Naive thymus-derived CD8-positive, alpha-beta T cell (primary cell): ENCODE measurements at regions of chr12 and their contacts with region 1.

Region 1: GRCh38 chr12:122067966-122068365 is 10.6 kb upstream of the MLXIP start:
- DNase-seq: peak in 8 of 10 donors; percentile 24 to 72 (median 50)
- ATAC-seq: peak; percentile 80 to 82
- H3K4me3 Mint-ChIP-seq: peak overlapping the region; percentile 64 to 86 (median 81)
- H3K27ac Mint-ChIP-seq: peak overlapping the region; percentile 44 to 94 (median 81)
- H3K4me1 Mint-ChIP-seq: peaks cover 21 to 39% (median 34%) of the 10 kb centered on the region in 4 donors
- H3K27me3 Mint-ChIP-seq: no peaks in the 10 kb centered on the region

Region 2: GRCh38 chr12:122040579-122041386 is 27.2 kb before region 1 on chr12:
- POLR2A ChIA-PET with region 1: no interaction called
- DNase-seq: no peak
- ATAC-seq: no peak
- H3K4me3 Mint-ChIP-seq: no peak overlapping the region
- H3K27ac Mint-ChIP-seq: peak overlapping the region in 2 of 10 donors; percentile 19 to 50
- H3K4me1 Mint-ChIP-seq: peaks cover 0 to 1% (median 0%) of the 10 kb centered on the region in 4 donors
- H3K27me3 Mint-ChIP-seq: no peaks in the 10 kb centered on the region

Region 3: GRCh38 chr12:122097927-122098756 is 30.2 kb after region 1 on chr12:
- POLR2A ChIA-PET with region 1: interaction called, 15 read pairs
- DNase-seq: no peak
- ATAC-seq: peak; percentile 29 to 36
- H3K4me3 Mint-ChIP-seq: peak overlapping the region; percentile 60 to 90 (median 74)
- H3K27ac Mint-ChIP-seq: peak overlapping the region in 9 of 10 donors; percentile 91 to 98 (median 96)
- H3K4me1 Mint-ChIP-seq: peaks cover 37 to 70% (median 65%) of the 10 kb centered on the region in 4 donors
- H3K27me3 Mint-ChIP-seq: no peaks in the 10 kb centered on the region